HCT116 (cell line): ENCODE measurements at regions of chrX and their contacts with region 1.

Region 1: DNA sequence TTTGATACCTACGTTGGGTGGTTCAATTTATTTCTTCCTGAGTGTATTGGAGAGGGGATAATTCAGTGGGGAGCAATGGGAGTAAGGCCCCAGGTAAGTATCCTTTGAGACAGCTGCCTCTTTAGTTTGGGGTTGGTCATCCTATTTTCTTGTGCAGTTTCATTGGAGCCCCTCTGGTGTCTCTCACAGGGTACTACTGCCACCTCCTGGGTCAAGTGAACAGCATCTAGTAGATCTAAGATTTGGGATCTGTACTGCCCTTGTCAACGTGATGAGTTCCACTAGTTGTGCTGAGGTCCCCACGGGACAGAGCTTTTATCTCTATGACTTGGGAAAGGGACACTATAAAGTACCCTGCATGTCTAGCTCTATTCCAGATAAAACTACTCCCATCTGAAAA is 80.6 kb downstream of the PBDC1 start:
- DNase-seq: peak; percentile 18
- ATAC-seq: peak; percentile 85
- H3K4me3 ChIP-seq: no peak overlapping the region
- H3K27ac ChIP-seq: no peak overlapping the region
- H3K4me1 ChIP-seq: no peaks in the 10 kb centered on the region
- H3K27me3 ChIP-seq: no peaks in the 10 kb centered on the region
- CTCF ChIP-seq: peak in 2 of 3 experiments; percentile 30 to 45; a peak in 3 of 6 replicates
- POLR2A ChIP-seq: no peak
- RAD21 ChIP-seq: peak; percentile 60

Region 2: DNA sequence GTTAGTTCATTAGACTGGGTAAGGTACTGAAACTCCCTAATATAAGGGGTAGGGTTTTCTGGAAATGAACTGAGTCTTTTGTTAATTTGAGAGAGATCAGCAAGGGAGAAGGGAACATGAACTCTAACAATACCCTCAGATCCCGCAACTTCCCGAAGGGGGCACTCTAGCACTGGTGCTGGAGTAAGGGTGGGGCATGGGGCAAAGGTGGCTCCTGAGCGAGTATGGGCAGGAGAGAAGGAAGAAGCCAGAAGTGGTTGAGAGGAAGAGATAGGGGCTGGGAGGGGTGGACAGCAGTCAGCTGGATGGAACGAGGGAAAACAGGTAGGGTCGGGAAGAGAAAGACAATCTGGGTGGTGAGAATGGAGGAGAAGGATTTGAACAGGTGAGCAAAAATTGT is 285.1 kb before region 1 on chrX:
- CTCF ChIA-PET with region 1: no interaction called
- POLR2A ChIA-PET with region 1: no interaction called
- RAD21 ChIA-PET with region 1: no interaction called
- intact Hi-C with region 1: loop called (anchors 1 kb)
- DNase-seq: peak; percentile 15
- ATAC-seq: peak; percentile 77
- H3K4me3 ChIP-seq: no peak overlapping the region
- H3K27ac ChIP-seq: no peak overlapping the region
- H3K4me1 ChIP-seq: no peaks in the 10 kb centered on the region
- H3K27me3 ChIP-seq: no peaks in the 10 kb centered on the region
- CTCF ChIP-seq: peak in 2 of 3 experiments; percentile 37 to 39; a peak in 3 of 6 replicates
- POLR2A ChIP-seq: no peak
- RAD21 ChIP-seq: peak; percentile 49; the same call in 1 of the 2 replicates

Region 3: DNA sequence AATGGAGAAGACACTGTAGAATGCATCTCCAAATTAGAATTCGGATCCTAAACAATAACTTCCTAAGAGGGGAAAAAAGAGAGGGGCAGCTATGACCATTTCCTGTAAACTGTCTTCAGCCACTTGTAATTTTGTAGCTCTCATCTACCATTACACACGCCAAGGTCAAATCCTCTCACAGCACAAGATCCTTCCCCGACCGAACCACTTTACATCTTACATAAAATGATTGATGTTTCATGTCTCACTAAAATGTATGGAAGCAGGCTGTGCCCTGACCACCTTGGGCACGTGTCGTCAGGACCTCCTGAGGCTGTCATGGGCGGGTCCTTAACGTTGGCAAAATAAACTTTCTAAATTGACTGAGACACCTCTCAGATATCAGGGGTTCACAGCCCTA is 104.7 kb before region 1 on chrX:
- CTCF ChIA-PET with region 1: no interaction called
- POLR2A ChIA-PET with region 1: no interaction called
- RAD21 ChIA-PET with region 1: no interaction called
- intact Hi-C with region 1: loop called (anchors 5 kb)
- DNase-seq: no peak
- ATAC-seq: 0 out of 2 replicates have a peak, but pooled peaks have one; percentile 15
- H3K4me3 ChIP-seq: 0 out of 4 replicates have a peak overlapping the region, but pooled peaks of 1 of the 2 experiments have one; percentile 2
- H3K27ac ChIP-seq: peak overlapping the region; percentile 71
- H3K4me1 ChIP-seq: peaks cover 11 to 17% of the 10 kb centered on the region in 2 experiments; a peak in 3 of 4 replicates
- H3K27me3 ChIP-seq: no peaks in the 10 kb centered on the region
- CTCF ChIP-seq: no peak
- POLR2A ChIP-seq: no peak
- RAD21 ChIP-seq: no peak

Region 4: GRCh38 chrX:76172325-76172893 is 81.0 kb before region 1 on chrX:
- CTCF ChIA-PET with region 1: interaction called, 4 read pairs
- POLR2A ChIA-PET with region 1: no interaction called
- RAD21 ChIA-PET with region 1: interaction called in 1 of 2 experiments, 3 read pairs
- intact Hi-C with region 1: loop called (anchors 5 kb)
- DNase-seq: no peak
- ATAC-seq: peak; percentile 59
- H3K4me3 ChIP-seq: peak overlapping the region; percentile 60 to 69
- H3K27ac ChIP-seq: peak overlapping the region; percentile 84
- H3K4me1 ChIP-seq: peaks cover 0 to 12% of the 10 kb centered on the region in 2 experiments; a peak in 1 of 4 replicates
- H3K27me3 ChIP-seq: no peaks in the 10 kb centered on the region
- CTCF ChIP-seq: no peak
- POLR2A ChIP-seq: no peak
- RAD21 ChIP-seq: no peak